ENCODE measurements at regions of chr3 and their contacts with region 1.

Region 1: GRCh38 chr3:151845506-151845905 is 27.9 kb upstream of the SUCNR1 start:
- DNase-seq: no peak
- ATAC-seq: no peak
- H3K4me3 ChIP-seq: no peak overlapping the region
- H3K27ac ChIP-seq: no peak overlapping the region
- H3K4me1 ChIP-seq: no peaks in the 10 kb centered on the region; a peak in 1 of 5 replicates
- H3K27me3 ChIP-seq: no peaks in the 10 kb centered on the region
- CTCF ChIP-seq: no peak
- EP300 ChIP-seq: no peak
- POLR2A ChIP-seq: no peak
- RAD21 ChIP-seq: no peak

Region 2: DNA sequence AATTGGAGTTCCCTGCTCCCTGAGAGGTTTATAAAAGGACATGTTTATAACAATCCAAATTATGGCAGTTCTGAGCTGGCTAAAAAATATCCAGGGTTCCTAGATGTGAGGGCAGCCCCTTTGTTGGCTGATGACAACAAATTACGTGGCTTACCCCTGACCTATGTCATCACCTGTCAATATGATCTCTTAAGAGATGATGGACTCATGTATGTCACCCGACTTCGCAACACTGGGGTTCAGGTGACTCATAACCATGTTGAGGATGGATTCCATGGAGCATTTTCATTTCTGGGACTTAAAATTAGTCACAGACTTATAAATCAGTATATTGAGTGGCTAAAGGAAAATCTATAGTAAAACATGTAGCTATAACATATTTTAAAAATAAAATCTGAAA is 17.7 kb before region 1 on chr3:
- CTCF ChIA-PET with region 1: no interaction called
- POLR2A ChIA-PET with region 1: no interaction called
- in situ Hi-C with region 1: no loop called
- intact Hi-C with region 1: no loop called
- DNase-seq: no peak
- ATAC-seq: no peak
- H3K4me3 ChIP-seq: no peak overlapping the region
- H3K27ac ChIP-seq: no peak overlapping the region
- H3K4me1 ChIP-seq: no peaks in the 10 kb centered on the region
- H3K27me3 ChIP-seq: no peaks in the 10 kb centered on the region
- CTCF ChIP-seq: no peak
- EP300 ChIP-seq: no peak
- POLR2A ChIP-seq: no peak
- RAD21 ChIP-seq: no peak

Region 3: GRCh38 chr3:151909681-151910405 is 64.3 kb after region 1 on chr3:
- CTCF ChIA-PET with region 1: no interaction called
- POLR2A ChIA-PET with region 1: no interaction called
- in situ Hi-C with region 1: loop called (anchors 5 kb)
- intact Hi-C with region 1: no loop called
- DNase-seq: no peak
- ATAC-seq: no peak
- H3K4me3 ChIP-seq: no peak overlapping the region
- H3K27ac ChIP-seq: no peak overlapping the region
- H3K4me1 ChIP-seq: 0 out of 5 replicates have a peak, but pooled peaks cover 0 to 4% of the 10 kb centered on the region in 2 experiments
- H3K27me3 ChIP-seq: no peaks in the 10 kb centered on the region
- CTCF ChIP-seq: no peak
- EP300 ChIP-seq: no peak
- POLR2A ChIP-seq: no peak
- RAD21 ChIP-seq: no peak

Region 4: DNA sequence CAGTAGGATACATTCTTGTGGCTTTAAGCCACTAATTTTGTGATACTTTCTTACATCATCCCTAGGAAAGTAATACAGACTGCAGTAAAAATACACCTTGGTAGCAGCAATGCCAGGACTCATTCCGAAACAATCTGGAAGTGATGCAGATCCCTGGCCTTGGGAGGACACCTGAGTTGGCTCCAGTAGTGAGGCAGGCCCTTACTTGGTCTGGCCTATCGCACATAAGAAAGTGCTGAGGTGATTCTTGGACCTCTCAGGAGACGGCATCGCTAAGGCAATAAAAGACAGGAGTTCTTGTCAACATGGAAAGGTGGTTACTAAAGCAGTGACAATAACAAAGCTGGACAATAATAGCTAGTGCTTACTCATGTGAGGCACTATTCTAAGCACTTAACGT is 154.4 kb after region 1 on chr3:
- CTCF ChIA-PET with region 1: no interaction called
- POLR2A ChIA-PET with region 1: no interaction called
- in situ Hi-C with region 1: no loop called
- intact Hi-C with region 1: no loop called
- DNase-seq: no peak
- ATAC-seq: no peak
- H3K4me3 ChIP-seq: no peak overlapping the region
- H3K27ac ChIP-seq: no peak overlapping the region
- H3K4me1 ChIP-seq: peaks cover 4 to 7% of the 10 kb centered on the region in 2 experiments; a peak in 3 of 5 replicates
- H3K27me3 ChIP-seq: no peaks in the 10 kb centered on the region
- CTCF ChIP-seq: no peak
- EP300 ChIP-seq: no peak
- POLR2A ChIP-seq: no peak
- RAD21 ChIP-seq: no peak

Region 5: DNA sequence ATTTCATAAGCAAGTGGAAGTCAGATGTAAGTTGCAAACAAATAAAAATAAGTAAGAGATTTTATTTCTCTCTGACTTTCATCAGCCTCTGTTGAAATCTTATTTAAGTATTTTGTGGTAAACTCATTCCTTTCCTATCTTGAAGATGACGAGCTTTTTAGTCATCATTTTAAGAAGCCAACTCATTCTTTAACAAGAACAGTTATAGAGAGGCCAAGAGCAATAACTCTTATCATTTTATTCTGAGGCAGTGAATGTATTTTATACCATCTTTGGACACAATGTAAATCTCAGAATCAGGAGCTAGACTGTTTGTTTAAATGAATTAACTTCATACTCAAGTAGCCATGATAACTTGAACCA is 275.8 kb after region 1 on chr3:
- CTCF ChIA-PET with region 1: no interaction called
- POLR2A ChIA-PET with region 1: no interaction called
- in situ Hi-C with region 1: no loop called
- intact Hi-C with region 1: no loop called
- DNase-seq: no peak
- ATAC-seq: no peak
- H3K4me3 ChIP-seq: no peak overlapping the region
- H3K27ac ChIP-seq: no peak overlapping the region
- H3K4me1 ChIP-seq: peaks cover 0 to 3% of the 10 kb centered on the region in 2 experiments; a peak in 2 of 5 replicates
- H3K27me3 ChIP-seq: no peaks in the 10 kb centered on the region
- CTCF ChIP-seq: no peak
- EP300 ChIP-seq: no peak
- POLR2A ChIP-seq: no peak
- RAD21 ChIP-seq: no peak